ENCODE measurements at regions of chr15 and their contacts with region 1.

Region 1: GRCh38 chr15:77966540-77967290 is 110.8 kb downstream of the TBC1D2B start:
- DNase-seq: peak; percentile 64
- H3K4me3 ChIP-seq: no peak overlapping the region
- H3K27ac ChIP-seq: no peak overlapping the region
- H3K4me1 ChIP-seq: no peaks in the 10 kb centered on the region
- H3K27me3 ChIP-seq: 0 out of 2 replicates have a peak, but pooled peaks cover 3% of the 10 kb centered on the region

Region 2: DNA sequence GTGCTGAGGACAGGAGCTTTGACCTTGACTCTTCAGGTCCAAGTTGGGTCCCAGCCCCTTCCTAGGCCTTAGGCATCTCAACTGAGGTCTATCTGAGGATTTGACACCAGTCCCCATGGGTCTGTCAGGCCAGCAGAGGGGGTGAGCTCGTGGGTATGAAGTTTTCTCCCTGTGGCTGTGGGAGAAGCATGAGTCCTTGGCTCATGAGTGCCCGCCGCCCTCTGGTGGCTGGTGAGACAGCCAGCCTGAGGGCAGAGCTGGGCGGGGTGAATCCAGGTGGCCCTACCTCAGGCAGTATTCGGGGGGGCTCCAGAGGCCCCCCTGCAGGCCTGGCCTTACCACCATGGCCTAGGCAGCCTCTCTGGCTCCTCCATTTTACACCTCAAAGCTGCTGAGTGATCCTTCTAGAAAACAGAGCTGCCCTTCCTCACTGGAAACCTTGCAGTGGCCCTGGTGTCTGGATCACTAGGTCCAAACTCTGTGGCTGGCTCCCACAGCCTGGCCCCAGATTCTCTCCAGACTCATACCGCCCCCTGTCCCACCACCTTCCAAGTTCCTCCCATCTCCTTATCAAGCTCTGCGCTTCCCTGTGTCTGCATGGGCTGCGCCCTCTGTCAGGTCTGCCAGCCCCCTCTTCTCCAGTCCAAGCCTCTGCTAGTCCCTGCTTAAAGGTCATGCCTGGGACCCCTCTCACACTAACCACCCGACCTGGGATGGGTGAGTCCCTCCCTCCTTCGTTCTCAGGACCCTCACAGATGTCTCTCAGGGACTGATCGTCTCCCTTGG is 141.8 kb after region 1 on chr15:
- in situ Hi-C with region 1: loop called (anchors 5 kb)
- DNase-seq: peak; percentile 94
- H3K4me3 ChIP-seq: no peak overlapping the region
- H3K27ac ChIP-seq: no peak overlapping the region
- H3K4me1 ChIP-seq: no peaks in the 10 kb centered on the region
- H3K27me3 ChIP-seq: no peaks in the 10 kb centered on the region

Region 3: GRCh38 chr15:78234515-78235040 is 267.9 kb after region 1 on chr15 and contains the start of gene ACSBG1:
- in situ Hi-C with region 1: loop called (anchors 10 kb)
- DNase-seq: no peak
- H3K4me3 ChIP-seq: no peak within 1 kb of the TSS
- H3K27ac ChIP-seq: no peak within 1 kb of the TSS
- H3K4me1 ChIP-seq: no peaks in the 10 kb centered on the region
- H3K27me3 ChIP-seq: peaks cover 30% of the 10 kb centered on the region
- total RNA-seq, gene ACSBG1: not detected in 2 replicates